ENCODE measurements at regions of chr12 and their contacts with region 1.

Region 1: DNA sequence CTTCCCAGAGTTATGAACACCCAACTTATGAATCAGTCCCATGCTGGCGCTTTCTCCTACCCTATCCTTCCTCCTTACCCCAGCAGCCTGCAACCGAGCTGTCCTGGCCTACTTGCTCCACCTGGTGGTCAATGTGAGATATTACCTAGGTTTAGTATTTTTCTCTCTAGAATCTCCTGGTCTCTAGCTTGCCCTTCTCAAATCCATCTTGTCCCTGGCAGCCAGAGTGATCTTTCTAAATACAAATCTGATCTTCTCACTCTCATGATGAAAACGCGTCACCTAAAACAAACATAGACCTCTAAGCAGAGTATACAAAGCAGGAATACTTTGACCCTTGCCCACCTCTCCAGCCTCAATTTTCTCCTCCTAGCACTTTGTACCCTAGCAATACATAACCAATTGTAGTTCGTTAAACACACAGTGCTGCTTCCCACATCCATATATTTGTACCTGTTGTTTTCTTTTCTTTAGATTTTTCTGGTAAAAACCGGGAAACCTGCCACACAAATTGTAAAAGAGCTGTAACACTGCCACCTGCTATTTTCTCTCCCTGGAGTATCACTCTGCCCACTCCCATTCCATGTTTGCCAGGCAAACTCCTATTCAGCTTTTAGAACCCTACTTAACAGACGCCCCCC is 20.0 kb upstream of the TCP11L2 start:
- DNase-seq: peak; percentile 18 to 23
- ATAC-seq: peak; percentile 49 to 75 (median 58)
- H3K4me3 ChIP-seq: no peak overlapping the region
- H3K27ac ChIP-seq: no peak overlapping the region
- H3K4me1 ChIP-seq: peaks cover 0 to 25% (median 11%) of the 10 kb centered on the region in 9 donors
- H3K27me3 ChIP-seq: no peaks in the 10 kb centered on the region
- CTCF ChIP-seq: peak; percentile 50 to 76 (median 70)

Region 2: DNA sequence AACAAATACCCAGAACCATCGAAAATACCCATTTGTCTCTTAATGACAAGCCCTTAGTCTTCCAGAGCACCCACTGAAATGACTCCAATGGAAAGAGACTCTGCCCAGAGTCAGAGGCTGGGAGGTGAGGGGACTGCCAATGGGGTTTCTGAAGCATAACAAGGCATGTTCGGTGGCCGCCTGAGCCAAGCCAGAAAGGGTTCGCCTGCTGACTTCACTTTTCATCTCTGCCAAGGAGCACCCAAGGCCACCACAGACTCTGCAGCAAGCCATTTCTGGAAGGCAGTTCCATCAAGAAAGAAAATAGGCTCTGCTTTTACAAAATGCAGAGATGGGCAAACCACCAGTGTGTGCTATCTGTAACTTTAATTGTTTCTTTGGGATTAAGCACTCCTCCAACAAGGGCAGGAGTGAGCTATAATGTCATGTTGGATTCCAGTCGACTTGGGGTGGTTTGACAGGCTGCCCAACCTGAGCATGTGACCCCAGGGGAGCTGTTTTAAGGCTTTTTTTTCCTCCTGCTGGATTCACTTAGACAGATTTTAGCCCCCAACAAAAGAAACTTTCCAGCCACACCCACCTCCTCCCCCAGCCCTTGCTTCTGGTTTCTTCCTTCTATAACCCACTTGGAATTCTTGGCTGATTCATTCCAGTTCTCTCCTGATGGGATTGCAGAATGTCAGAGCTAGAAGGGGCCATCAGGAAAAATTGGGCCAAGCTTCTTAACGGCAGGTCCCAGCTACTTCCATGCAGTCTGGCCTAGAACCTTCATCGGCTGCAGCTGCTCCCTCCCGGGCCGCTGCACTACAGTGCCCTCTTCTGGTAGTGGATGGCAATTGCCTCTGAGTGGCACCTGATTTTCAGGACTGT is 58.9 kb before region 1 on chr12:
- intact Hi-C with region 1: loop called (anchors 1 to 10 kb)
- DNase-seq: peak; percentile 60 to 68
- ATAC-seq: peak; percentile 59 to 86 (median 74)
- H3K4me3 ChIP-seq: no peak overlapping the region
- H3K27ac ChIP-seq: peak overlapping the region in 1 of 10 donors; percentile 24
- H3K4me1 ChIP-seq: peaks cover 0 to 22% (median 7%) of the 10 kb centered on the region in 9 donors
- H3K27me3 ChIP-seq: no peaks in the 10 kb centered on the region
- CTCF ChIP-seq: peak; percentile 93 to 97 (median 95)

Region 3: DNA sequence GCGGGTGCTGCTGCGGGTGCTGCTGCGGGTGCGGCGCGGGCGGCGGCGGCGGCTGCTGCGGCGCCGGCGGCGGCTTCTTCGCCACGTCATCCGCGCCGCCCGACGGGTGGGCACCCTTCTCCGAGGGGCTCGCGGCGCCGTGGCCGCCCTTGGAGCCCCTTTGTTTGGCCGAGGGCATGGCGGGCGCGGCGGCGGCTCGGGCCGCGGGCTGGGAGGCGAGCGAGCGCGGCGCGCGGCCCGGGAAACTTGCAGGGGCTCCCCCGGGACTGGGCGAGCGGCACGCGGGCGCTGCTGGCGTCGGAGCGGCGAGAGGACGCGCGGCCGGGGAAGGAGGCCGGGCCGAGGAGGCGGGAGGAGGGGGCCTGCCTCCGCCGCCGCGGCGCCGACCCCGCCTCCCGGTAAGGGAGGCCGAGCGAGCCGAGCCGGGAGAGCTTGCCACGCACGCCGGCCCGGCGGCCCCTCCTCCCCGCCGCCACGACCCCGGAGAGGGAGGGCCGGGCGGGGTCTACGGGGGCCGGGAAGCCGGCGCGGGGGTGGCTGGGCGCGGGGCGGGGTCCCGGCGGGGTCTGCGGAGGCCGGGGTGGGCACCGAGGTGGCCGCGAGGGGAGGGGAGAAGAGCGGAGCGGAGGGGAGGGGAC is 34.8 kb before region 1 on chr12 and contains the start of gene CKAP4:
- intact Hi-C with region 1: loop called in 3 of 10 experiments (anchors 5 kb)
- DNase-seq: peak; percentile 77 to 86
- ATAC-seq: peak; percentile 76 to 92 (median 84)
- H3K4me3 ChIP-seq: peak within 1 kb of the TSS; percentile 67 to 98 (median 89)
- H3K27ac ChIP-seq: peak within 1 kb of the TSS; percentile 97 to 100 (median 99)
- H3K4me1 ChIP-seq: peaks cover 14 to 61% (median 48%) of the 10 kb centered on the region in 9 donors
- H3K27me3 ChIP-seq: no peaks in the 10 kb centered on the region
- CTCF ChIP-seq: no peak
- total RNA-seq, gene CKAP4: 38.5 to 63.2 (median 47.9) TPM

Region 4: GRCh38 chr12:106317406-106318082 is 35.0 kb after region 1 on chr12:
- intact Hi-C with region 1: no loop called
- DNase-seq: no peak
- ATAC-seq: peak; percentile 31 to 78 (median 60)
- H3K4me3 ChIP-seq: no peak overlapping the region
- H3K27ac ChIP-seq: peak overlapping the region in 7 of 10 donors; percentile 28 to 76 (median 67)
- H3K4me1 ChIP-seq: peaks cover 0 to 45% (median 28%) of the 10 kb centered on the region in 9 donors
- H3K27me3 ChIP-seq: no peaks in the 10 kb centered on the region
- CTCF ChIP-seq: no peak